Sigmoid colon (tissue), 7 donors: ENCODE measurements at regions of chr13 and their contacts with region 1.

Region 1: GRCh38 chr13:47774671-47774994 is 226.4 kb downstream of the SUCLA2 start:
- DNase-seq: no peak
- H3K4me3 ChIP-seq: no peak overlapping the region
- H3K27ac ChIP-seq: no peak overlapping the region
- H3K4me1 ChIP-seq: no peaks in the 10 kb centered on the region
- H3K27me3 ChIP-seq: no peaks in the 10 kb centered on the region
- CTCF ChIP-seq: no peak
- EP300 ChIP-seq: no peak
- POLR2A ChIP-seq: no peak

Region 2: GRCh38 chr13:46728777-46729176 is 1045.9 kb before region 1 on chr13:
- intact Hi-C with region 1: no loop called
- DNase-seq: no peak
- H3K4me3 ChIP-seq: no peak overlapping the region
- H3K27ac ChIP-seq: no peak overlapping the region
- H3K4me1 ChIP-seq: no peaks in the 10 kb centered on the region
- H3K27me3 ChIP-seq: no peaks in the 10 kb centered on the region
- CTCF ChIP-seq: no peak
- EP300 ChIP-seq: no peak
- POLR2A ChIP-seq: no peak

Region 3: DNA sequence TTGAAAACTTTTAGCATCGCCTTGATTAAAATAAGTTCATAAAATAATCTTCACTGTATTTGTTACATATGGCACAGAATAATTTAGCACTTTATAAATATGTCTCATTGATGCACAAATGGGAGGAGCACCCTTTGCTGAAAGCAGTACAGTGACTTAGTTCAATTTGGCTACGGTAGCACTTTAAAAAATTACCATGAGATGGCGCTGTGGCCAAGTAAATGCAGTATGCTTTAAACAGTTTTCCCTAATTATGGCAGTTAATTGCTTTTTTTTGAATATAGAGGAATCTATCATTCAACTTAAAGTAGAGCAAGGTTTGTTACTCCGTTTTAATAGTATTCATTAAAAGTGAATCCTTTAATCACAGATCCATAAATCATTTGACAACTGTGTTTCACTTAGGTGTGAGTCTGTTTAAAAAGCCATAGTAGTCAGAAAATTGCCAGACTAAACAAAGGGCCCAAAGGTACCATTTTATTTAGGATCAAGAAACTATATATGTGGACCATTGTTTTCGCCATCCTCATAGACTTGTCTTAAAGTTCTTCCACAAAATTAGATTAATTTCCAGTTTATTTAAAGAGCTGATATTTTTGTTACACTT is 942.9 kb before region 1 on chr13:
- intact Hi-C with region 1: loop called (anchors 2 kb)
- DNase-seq: no peak
- H3K4me3 ChIP-seq: no peak overlapping the region
- H3K27ac ChIP-seq: no peak overlapping the region
- H3K4me1 ChIP-seq: no peaks in the 10 kb centered on the region
- H3K27me3 ChIP-seq: no peaks in the 10 kb centered on the region
- CTCF ChIP-seq: peak; percentile 36 to 69 (median 54)
- EP300 ChIP-seq: no peak
- POLR2A ChIP-seq: no peak

Region 4: GRCh38 chr13:47621931-47622330 is 152.7 kb before region 1 on chr13:
- intact Hi-C with region 1: no loop called
- DNase-seq: no peak
- H3K4me3 ChIP-seq: no peak overlapping the region
- H3K27ac ChIP-seq: no peak overlapping the region
- H3K4me1 ChIP-seq: no peaks in the 10 kb centered on the region
- H3K27me3 ChIP-seq: no peaks in the 10 kb centered on the region
- CTCF ChIP-seq: no peak
- EP300 ChIP-seq: no peak
- POLR2A ChIP-seq: no peak

Region 5: GRCh38 chr13:47826471-47826870 is 51.8 kb after region 1 on chr13:
- intact Hi-C with region 1: no loop called
- DNase-seq: no peak
- H3K4me3 ChIP-seq: no peak overlapping the region
- H3K27ac ChIP-seq: peak overlapping the region in 2 of 4 donors; percentile 18 to 40
- H3K4me1 ChIP-seq: no peaks in the 10 kb centered on the region
- H3K27me3 ChIP-seq: no peaks in the 10 kb centered on the region
- CTCF ChIP-seq: no peak
- EP300 ChIP-seq: no peak
- POLR2A ChIP-seq: no peak